ENCODE measurements at regions of chr15 and their contacts with region 1.

Region 1: GRCh38 chr15:99343881-99344551 is 92.7 kb downstream of the LRRC28 start:
- DNase-seq: peak; percentile 51
- ATAC-seq: peak; percentile 69
- H3K4me3 ChIP-seq: no peak overlapping the region
- H3K4me3 Mint-ChIP-seq: no peak overlapping the region
- H3K27ac ChIP-seq: no peak overlapping the region
- H3K27ac Mint-ChIP-seq: no peak overlapping the region
- H3K4me1 ChIP-seq: peaks cover 20 to 22% of the 10 kb centered on the region in 2 donors
- H3K4me1 Mint-ChIP-seq: peaks cover 26% of the 10 kb centered on the region
- H3K27me3 ChIP-seq: no peaks in the 10 kb centered on the region
- H3K27me3 Mint-ChIP-seq: no peaks in the 10 kb centered on the region
- CTCF ChIP-seq: peak; percentile 49

Region 2: GRCh38 chr15:99275525-99276128 is 68.4 kb before region 1 on chr15:
- CTCF ChIA-PET with region 1: no interaction called
- POLR2A ChIA-PET with region 1: no interaction called
- intact Hi-C with region 1: no loop called
- DNase-seq: peak; percentile 22
- ATAC-seq: peak; percentile 17
- H3K4me3 ChIP-seq: no peak overlapping the region
- H3K4me3 Mint-ChIP-seq: no peak overlapping the region
- H3K27ac ChIP-seq: no peak overlapping the region
- H3K27ac Mint-ChIP-seq: no peak overlapping the region
- H3K4me1 ChIP-seq: peaks cover 6 to 10% of the 10 kb centered on the region in 2 donors
- H3K4me1 Mint-ChIP-seq: peaks cover 11% of the 10 kb centered on the region
- H3K27me3 ChIP-seq: no peaks in the 10 kb centered on the region
- H3K27me3 Mint-ChIP-seq: no peaks in the 10 kb centered on the region
- CTCF ChIP-seq: no peak

Region 3: DNA sequence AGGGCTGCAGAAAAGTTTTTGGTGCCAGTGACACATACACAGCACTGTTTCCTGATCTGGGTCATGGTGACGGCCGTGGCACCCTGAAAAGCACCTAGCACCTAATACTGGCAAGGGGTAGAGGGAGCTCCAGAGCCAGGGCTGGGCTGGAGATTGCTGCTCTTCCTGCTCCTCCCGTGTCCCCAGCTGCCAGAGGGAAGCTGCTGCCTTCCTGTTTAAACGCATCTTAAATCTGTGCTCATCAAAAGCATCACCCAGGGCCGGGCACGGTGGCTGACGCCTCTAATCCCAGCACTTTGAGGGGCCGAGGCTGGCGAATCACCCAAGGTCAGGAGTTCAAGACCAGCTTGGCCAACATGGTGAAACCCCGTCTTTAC is 65.1 kb after region 1 on chr15:
- CTCF ChIA-PET with region 1: interaction called, 3 read pairs
- POLR2A ChIA-PET with region 1: no interaction called
- intact Hi-C with region 1: loop called (anchors 10 kb)
- DNase-seq: peak; percentile 49
- ATAC-seq: peak; percentile 53
- H3K4me3 ChIP-seq: no peak overlapping the region
- H3K4me3 Mint-ChIP-seq: no peak overlapping the region
- H3K27ac ChIP-seq: no peak overlapping the region
- H3K27ac Mint-ChIP-seq: peak overlapping the region; percentile 26
- H3K4me1 ChIP-seq: peaks cover 0 to 5% of the 10 kb centered on the region in 2 donors
- H3K4me1 Mint-ChIP-seq: peaks cover 3% of the 10 kb centered on the region
- H3K27me3 ChIP-seq: no peaks in the 10 kb centered on the region
- H3K27me3 Mint-ChIP-seq: no peaks in the 10 kb centered on the region
- CTCF ChIP-seq: no peak

Region 4: DNA sequence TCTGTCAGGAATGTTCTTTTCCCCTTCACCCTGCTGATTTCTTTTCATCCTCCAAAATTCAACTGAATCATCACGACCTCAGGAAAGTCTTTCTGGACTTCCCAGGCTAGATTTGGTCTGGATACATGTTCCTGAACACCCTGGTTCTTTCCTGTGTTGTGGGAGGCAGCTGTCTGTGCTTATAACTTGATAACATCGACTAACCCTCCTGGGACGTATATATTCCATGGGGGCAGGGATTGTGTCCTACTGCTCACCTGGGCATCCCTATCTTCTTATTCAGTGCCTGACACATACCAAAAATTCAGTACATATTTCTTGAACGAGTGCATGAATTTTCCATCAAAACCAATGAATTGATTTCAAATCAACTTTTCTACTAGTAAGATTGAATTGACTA is 174.2 kb after region 1 on chr15:
- CTCF ChIA-PET with region 1: no interaction called
- POLR2A ChIA-PET with region 1: no interaction called
- intact Hi-C with region 1: no loop called
- DNase-seq: no peak
- ATAC-seq: no peak
- H3K4me3 ChIP-seq: no peak overlapping the region
- H3K4me3 Mint-ChIP-seq: no peak overlapping the region
- H3K27ac ChIP-seq: no peak overlapping the region
- H3K27ac Mint-ChIP-seq: no peak overlapping the region
- H3K4me1 ChIP-seq: peaks cover 29 to 30% of the 10 kb centered on the region in 2 donors
- H3K4me1 Mint-ChIP-seq: peaks cover 47% of the 10 kb centered on the region
- H3K27me3 ChIP-seq: no peaks in the 10 kb centered on the region
- H3K27me3 Mint-ChIP-seq: no peaks in the 10 kb centered on the region
- CTCF ChIP-seq: no peak

Measured in B cell (primary cell).